ENCODE measurements at regions of chr6 and their contacts with region 1.

Region 1: GRCh38 chr6:81752138-81752920 is at the start of gene TENT5A:
- DNase-seq: peak; percentile 89
- H3K4me3 Mint-ChIP-seq: peak within 1 kb of the TSS; percentile 88
- H3K27ac Mint-ChIP-seq: peak within 1 kb of the TSS; percentile 77
- H3K4me1 Mint-ChIP-seq: peaks cover 28% of the 10 kb centered on the region
- H3K27me3 Mint-ChIP-seq: peaks cover 12% of the 10 kb centered on the region
- total RNA-seq, gene TENT5A: 0.72 to 1.0 TPM

Region 2: GRCh38 chr6:79777713-79778579 is 1974.4 kb before region 1 on chr6:
- CTCF ChIA-PET with region 1: interaction called, 3 read pairs
- intact Hi-C with region 1: loop called (anchors 5 kb)
- DNase-seq: peak; percentile 92
- H3K4me3 Mint-ChIP-seq: peak overlapping the region; percentile 64
- H3K27ac Mint-ChIP-seq: peak overlapping the region; percentile 50
- H3K4me1 Mint-ChIP-seq: peaks cover 6% of the 10 kb centered on the region
- H3K27me3 Mint-ChIP-seq: no peaks in the 10 kb centered on the region

Region 3: DNA sequence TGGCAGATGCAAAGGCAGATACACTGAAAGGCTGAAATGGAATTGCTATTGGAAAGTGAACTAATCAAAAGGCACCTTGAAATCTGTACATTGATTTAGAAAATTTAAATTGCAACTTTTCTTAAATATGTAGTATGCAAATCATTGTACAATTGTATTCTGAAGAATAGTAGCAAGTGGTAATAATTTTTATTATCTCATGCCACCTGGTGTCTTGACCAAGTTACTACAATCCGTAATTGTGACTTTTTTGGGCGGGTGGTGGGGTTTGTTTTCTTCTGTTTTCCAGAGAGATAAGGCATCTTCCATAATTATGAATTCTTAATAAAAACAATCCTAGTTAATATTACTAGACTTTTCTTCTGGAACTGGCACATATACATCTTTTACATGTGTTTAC is 1658.3 kb before region 1 on chr6:
- CTCF ChIA-PET with region 1: no interaction called
- intact Hi-C with region 1: loop called (anchors 5 kb)
- DNase-seq: peak; percentile 14
- H3K4me3 Mint-ChIP-seq: no peak overlapping the region
- H3K27ac Mint-ChIP-seq: no peak overlapping the region
- H3K4me1 Mint-ChIP-seq: no peaks in the 10 kb centered on the region
- H3K27me3 Mint-ChIP-seq: no peaks in the 10 kb centered on the region

Region 4: DNA sequence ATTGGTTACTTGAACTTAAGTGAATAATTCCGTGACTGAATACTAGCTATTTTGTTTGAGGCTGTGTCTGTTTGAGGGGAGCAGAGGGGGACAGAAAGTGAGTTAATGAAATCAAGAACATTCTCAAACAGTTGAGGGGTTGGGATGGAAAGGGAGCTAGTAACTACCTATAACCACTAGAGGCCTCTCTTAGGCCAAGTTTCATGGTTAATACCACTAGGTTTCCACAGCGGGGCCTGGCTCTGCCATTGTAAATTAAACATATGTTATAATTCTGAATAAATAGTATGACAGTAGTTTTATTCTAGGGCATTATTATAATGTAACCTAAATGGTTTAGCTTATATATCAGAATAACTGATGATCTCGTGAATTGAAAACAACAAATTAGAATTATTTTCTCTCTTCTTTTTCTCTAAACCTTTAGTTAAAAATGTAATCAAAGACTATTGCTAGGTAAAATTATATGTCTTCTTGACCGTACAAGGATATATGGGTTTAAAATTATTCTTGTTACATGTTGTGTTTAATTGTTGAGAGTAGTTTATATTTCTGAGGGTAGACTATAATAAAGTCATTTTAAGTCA is 1537.8 kb before region 1 on chr6:
- CTCF ChIA-PET with region 1: interaction called, 4 read pairs
- intact Hi-C with region 1: loop called (anchors 1 kb)
- DNase-seq: peak; percentile 14
- H3K4me3 Mint-ChIP-seq: no peak overlapping the region
- H3K27ac Mint-ChIP-seq: no peak overlapping the region
- H3K4me1 Mint-ChIP-seq: peaks cover 5% of the 10 kb centered on the region
- H3K27me3 Mint-ChIP-seq: no peaks in the 10 kb centered on the region

Region 5: DNA sequence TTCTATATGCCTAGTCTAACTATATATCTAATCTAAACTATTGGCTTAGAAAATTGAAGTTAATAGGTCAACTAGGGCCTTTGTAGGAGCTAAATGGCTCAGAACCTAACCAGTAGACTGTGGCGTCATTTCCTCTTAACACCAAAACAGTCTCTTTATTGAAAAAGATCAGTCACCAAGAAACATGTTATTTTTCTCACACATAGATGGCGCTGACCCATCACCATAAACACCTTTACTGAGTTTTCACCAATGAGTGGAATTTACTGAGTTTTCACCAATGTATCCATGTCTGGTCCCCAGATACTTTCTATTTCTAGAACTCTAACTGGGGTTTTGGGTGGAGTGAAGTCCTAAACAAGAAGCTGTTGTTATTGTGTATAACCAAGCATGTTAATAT is 1009.8 kb before region 1 on chr6:
- CTCF ChIA-PET with region 1: no interaction called
- intact Hi-C with region 1: loop called (anchors 5 kb)
- DNase-seq: no peak
- H3K4me3 Mint-ChIP-seq: no peak overlapping the region
- H3K27ac Mint-ChIP-seq: no peak overlapping the region
- H3K4me1 Mint-ChIP-seq: no peaks in the 10 kb centered on the region
- H3K27me3 Mint-ChIP-seq: no peaks in the 10 kb centered on the region

Region 6: DNA sequence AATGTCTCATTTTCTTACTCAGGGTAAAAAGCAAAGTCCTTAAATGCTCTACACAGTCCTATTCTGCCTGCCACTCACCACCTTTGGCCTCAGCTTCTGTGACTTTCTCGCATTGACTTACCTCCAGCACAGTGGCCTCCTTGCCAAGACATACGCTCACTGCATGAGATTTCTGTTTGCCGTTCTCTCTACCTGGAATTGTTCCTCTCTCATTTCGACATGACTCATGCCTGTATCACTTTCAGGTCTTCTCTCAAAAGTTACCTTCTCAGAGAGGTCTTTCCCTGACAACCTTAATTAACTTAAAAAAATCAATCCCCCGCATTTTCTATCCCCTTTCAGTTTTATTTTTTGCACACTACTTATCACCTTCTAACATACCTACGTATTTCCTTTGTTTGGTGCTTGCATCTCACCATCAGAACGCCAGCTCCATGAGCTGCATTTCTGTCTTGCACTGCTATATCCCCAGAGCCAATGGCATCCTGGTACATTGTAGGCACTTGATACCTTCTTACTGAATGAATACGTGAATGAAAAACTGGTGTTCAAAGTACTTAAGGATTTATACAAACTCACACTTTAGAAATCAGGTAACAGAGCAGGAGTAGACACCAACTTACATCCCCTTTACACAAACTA is 24.3 kb before region 1 on chr6:
- CTCF ChIA-PET with region 1: no interaction called
- intact Hi-C with region 1: loop called (anchors 1 kb)
- DNase-seq: peak; percentile 48
- H3K4me3 Mint-ChIP-seq: no peak overlapping the region
- H3K27ac Mint-ChIP-seq: no peak overlapping the region
- H3K4me1 Mint-ChIP-seq: peaks cover 11% of the 10 kb centered on the region
- H3K27me3 Mint-ChIP-seq: no peaks in the 10 kb centered on the region

Region 7: GRCh38 chr6:82006027-82006738 is 253.9 kb after region 1 on chr6:
- CTCF ChIA-PET with region 1: no interaction called
- intact Hi-C with region 1: no loop called
- DNase-seq: peak; percentile 5
- H3K4me3 Mint-ChIP-seq: no peak overlapping the region
- H3K27ac Mint-ChIP-seq: no peak overlapping the region
- H3K4me1 Mint-ChIP-seq: no peaks in the 10 kb centered on the region
- H3K27me3 Mint-ChIP-seq: no peaks in the 10 kb centered on the region